ENCODE measurements at regions of chr3 and their contacts with region 1.

Region 1: GRCh38 chr3:97804471-97804870 is 17.3 kb upstream of the CRYBG3 start:
- DNase-seq: no peak
- H3K4me3 ChIP-seq: no peak overlapping the region
- H3K27me3 ChIP-seq: no peaks in the 10 kb centered on the region
- CTCF ChIP-seq: no peak

Region 2: DNA sequence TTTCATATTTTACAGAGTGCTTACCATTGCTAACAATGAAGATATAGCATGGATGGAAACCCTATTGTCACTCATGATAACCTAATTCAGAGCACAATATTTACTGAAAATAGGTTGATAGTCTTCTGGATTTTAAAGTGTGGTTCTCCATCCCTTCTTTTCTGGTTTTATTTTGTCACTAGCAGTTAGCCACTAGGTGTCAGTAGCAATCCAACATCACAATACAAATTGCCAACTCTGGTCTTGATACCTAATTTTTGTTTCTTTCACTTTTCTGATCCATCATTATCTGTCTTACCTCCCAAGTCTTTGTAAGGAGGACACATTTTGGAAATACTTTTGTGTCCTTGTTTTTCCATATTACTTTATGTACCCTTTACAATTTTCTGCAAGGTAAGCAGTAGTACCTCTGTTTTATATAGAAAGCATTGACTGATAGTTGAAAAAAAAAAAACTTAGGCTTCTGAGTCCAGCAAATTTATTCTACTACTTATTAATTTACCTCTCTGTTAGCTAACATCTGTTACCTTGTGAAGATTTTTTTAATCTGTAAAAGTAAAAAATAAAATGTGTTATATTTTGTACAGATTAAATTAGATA is 11.0 kb before region 1 on chr3:
- CTCF ChIA-PET with region 1: interaction called, 11 read pairs
- POLR2A ChIA-PET with region 1: no interaction called
- DNase-seq: peak; percentile 6
- H3K4me3 ChIP-seq: no peak overlapping the region
- H3K27me3 ChIP-seq: no peaks in the 10 kb centered on the region
- CTCF ChIP-seq: peak; percentile 72

Measured in BJ (cell line).